Cardiac septum (tissue), 1 donor: ENCODE measurements at regions of chr3 and their contacts with region 1.

Region 1: GRCh38 chr3:99023590-99024192 is 122.2 kb upstream of the DCBLD2 start:
- DNase-seq: no peak

Region 2: DNA sequence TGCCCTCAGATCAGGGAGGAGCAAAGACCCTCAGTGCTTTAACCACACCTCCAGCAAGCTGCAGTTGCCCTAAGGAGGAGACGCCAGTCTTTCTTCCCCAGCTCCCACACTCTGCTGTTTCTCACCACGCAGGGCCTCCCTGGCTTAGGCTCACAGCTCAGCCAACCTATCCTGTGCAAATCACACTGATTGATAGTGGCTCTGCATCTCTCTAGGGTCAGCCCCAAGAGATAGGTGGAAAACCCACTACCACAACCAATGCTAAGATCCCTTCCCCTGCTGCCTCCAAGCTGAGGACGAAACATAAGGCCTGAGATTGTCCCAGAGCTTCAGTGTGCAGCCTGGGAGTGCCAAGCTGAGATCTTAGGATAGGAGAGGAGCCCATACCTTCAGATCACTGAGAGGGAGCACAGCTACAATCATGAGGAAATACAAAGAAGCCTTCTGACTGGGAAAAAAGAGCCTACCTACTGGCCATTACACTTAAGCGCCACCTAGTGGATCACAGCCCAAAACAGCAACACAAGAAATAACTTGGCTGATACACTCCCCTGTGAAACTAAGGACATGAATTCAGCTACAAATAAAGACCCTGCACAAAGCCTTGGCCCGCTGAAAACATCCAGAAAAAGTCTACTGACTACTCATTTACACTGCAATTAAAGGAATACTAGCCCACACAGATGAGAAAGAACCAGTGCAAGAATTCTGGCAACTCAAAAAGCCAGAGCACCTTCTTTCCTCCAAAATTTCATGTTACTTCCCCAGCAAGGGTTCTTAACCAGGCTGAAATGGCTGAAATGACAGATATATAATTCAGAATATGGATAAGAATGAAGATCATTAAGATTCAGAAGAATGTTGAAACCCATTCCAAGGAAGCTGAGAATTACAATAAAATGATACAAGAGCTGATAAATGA is 149.3 kb after region 1 on chr3:
- intact Hi-C with region 1: loop called (anchors 5 kb)
- DNase-seq: no peak

Region 3: GRCh38 chr3:99753268-99753975 is 729.7 kb after region 1 on chr3:
- intact Hi-C with region 1: loop called (anchors 2 kb)
- DNase-seq: no peak

Region 4: GRCh38 chr3:99789011-99789721 is 765.5 kb after region 1 on chr3:
- intact Hi-C with region 1: loop called (anchors 10 kb)
- DNase-seq: no peak